ENCODE measurements at regions of chr1 and their contacts with region 1.

Region 1: DNA sequence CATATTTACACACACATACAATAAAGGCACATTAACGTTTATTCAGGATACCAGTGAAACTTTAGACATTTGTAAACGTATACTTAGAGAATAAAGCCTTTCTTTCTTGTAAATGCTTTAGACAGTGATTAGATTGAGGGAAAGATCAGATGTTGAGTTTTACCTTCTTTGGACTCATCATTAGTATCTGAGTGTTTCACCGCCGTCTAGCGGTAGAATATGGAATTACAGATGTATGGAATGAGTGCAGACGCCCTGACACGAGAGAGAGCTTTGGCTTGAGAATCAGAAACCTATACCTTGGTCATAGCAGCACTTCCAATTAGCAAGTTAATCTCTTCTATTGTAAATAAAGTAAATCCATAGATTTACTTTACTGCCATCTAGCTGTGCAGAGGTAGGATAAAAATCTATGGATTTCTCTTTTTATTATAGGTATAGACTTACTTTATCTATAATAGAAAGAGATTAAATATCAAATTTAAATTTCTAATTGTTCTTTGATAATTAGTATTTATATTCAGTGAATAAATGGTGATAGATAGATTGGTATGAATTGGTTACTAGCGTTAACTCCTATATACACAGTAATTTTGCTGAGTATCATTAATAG is 12.6 kb downstream of the FLG2 start:
- DNase-seq: peak; percentile 35 to 70 (median 56)
- ATAC-seq: peak; percentile 77
- H3K4me3 ChIP-seq: no peak overlapping the region
- H3K27ac ChIP-seq: no peak overlapping the region
- H3K4me1 ChIP-seq: no peaks in the 10 kb centered on the region
- H3K27me3 ChIP-seq: no peaks in the 10 kb centered on the region
- CTCF ChIP-seq: peak; percentile 61 to 80 (median 69)
- EP300 ChIP-seq: no peak
- POLR2A ChIP-seq: no peak
- RAD21 ChIP-seq: peak; percentile 22 to 61; a peak in 3 of 4 replicates

Region 2: GRCh38 chr1:152459596-152460528 is 112.6 kb after region 1 on chr1:
- CTCF ChIA-PET with region 1: interaction called, 3 read pairs
- POLR2A ChIA-PET with region 1: no interaction called
- in situ Hi-C with region 1: no loop called
- intact Hi-C with region 1: loop called (anchors 5 kb)
- DNase-seq: peak; percentile 38 to 72 (median 62)
- ATAC-seq: peak; percentile 90
- H3K4me3 ChIP-seq: no peak overlapping the region
- H3K27ac ChIP-seq: no peak overlapping the region
- H3K4me1 ChIP-seq: peaks cover 0 to 5% of the 10 kb centered on the region in 2 experiments; a peak in 1 of 5 replicates
- H3K27me3 ChIP-seq: no peaks in the 10 kb centered on the region
- CTCF ChIP-seq: peak; percentile 70 to 80 (median 72)
- EP300 ChIP-seq: no peak
- POLR2A ChIP-seq: no peak
- RAD21 ChIP-seq: peak in 1 of 2 experiments; percentile 24; a peak in 1 of 4 replicates